IMR-90 (cell line): ENCODE measurements at regions of chr1 and their contacts with region 1.

Region 1: GRCh38 chr1:69747196-69747595 is 179.5 kb downstream of the LRRC7 start:
- DNase-seq: no peak
- ATAC-seq: no peak
- H3K4me3 ChIP-seq: no peak overlapping the region
- H3K27ac ChIP-seq: no peak overlapping the region
- H3K4me1 ChIP-seq: no peaks in the 10 kb centered on the region
- H3K27me3 ChIP-seq: no peaks in the 10 kb centered on the region
- CTCF ChIP-seq: no peak
- POLR2A ChIP-seq: no peak
- RAD21 ChIP-seq: no peak

Region 2: DNA sequence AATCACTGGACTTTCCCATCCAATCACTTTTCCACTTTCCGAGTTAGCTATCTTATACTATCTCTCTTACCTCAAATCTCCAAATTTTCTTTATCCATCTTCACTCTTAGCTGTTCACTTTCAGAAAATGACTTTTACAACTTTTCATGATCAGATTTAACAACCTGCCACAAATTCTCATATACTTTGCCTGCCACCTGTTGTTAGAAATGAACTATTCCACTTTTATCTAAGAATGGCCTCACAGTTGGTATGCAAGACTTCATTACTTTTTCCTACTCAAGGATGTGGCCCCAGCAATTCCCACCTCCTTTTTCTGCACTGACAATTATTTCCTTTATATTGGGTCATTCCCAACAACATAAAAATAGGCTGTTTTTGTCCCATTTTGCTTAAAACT is 1156.7 kb before region 1 on chr1:
- CTCF ChIA-PET with region 1: no interaction called
- POLR2A ChIA-PET with region 1: no interaction called
- dilution Hi-C with region 1: no loop called
- in situ Hi-C with region 1: no loop called
- intact Hi-C with region 1: loop called (anchors 5 kb)
- DNase-seq: no peak
- ATAC-seq: no peak
- H3K4me3 ChIP-seq: no peak overlapping the region
- H3K27ac ChIP-seq: no peak overlapping the region
- H3K4me1 ChIP-seq: no peaks in the 10 kb centered on the region
- H3K27me3 ChIP-seq: no peaks in the 10 kb centered on the region
- CTCF ChIP-seq: no peak
- POLR2A ChIP-seq: no peak
- RAD21 ChIP-seq: no peak

Region 3: DNA sequence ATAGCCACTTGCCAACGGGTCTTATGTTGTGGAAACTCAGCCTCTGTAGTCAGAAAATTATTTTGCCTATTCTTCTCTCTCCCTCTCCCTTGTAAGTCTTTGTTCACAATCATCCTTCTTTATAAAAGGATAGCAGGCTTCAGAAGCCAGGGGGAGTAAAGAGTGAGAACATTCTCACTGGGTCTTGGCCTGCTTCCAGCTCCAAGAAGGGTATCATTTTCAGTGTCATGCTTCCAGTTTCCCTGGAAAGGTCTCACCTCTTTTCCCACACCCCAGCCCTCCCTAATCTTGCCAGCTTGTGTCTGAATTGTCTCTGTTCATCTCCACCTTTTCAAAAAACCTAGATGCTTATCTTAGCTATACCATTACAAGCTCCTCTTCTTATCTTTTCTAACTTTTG is 525.7 kb before region 1 on chr1:
- CTCF ChIA-PET with region 1: no interaction called
- POLR2A ChIA-PET with region 1: no interaction called
- dilution Hi-C with region 1: no loop called
- in situ Hi-C with region 1: no loop called
- intact Hi-C with region 1: no loop called
- DNase-seq: no peak
- ATAC-seq: no peak
- H3K4me3 ChIP-seq: no peak overlapping the region
- H3K27ac ChIP-seq: no peak overlapping the region
- H3K4me1 ChIP-seq: no peaks in the 10 kb centered on the region
- H3K27me3 ChIP-seq: no peaks in the 10 kb centered on the region
- CTCF ChIP-seq: no peak
- POLR2A ChIP-seq: no peak
- RAD21 ChIP-seq: no peak

Region 4: DNA sequence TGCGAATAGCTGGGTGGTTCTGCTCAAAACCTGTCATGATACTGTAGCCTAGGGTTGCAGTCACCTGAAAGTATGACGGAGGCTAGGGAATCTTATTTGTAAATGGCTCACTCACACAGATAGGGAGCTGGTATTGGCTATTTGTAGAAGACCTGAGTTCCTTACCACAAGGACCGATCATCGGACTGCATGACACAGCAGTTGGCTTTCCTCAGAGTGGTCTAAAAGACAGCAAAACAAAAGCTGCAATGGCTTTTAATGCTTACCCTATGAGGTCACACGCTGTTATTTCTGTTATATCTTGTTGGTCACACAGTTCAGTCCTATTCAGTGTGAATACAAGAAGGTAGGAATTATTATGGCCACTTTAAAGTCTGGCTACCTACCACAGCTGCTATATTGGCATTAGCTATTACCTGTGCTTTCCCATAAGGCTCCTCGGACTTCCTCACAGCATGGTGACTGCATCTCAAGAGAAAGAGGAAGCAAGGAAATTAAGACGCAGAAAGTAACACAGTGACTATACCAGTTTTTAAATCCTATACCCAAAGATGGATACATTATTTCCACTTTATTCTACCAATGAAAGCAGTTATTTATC is 247.9 kb before region 1 on chr1:
- CTCF ChIA-PET with region 1: no interaction called
- POLR2A ChIA-PET with region 1: no interaction called
- dilution Hi-C with region 1: no loop called
- in situ Hi-C with region 1: no loop called
- intact Hi-C with region 1: no loop called
- DNase-seq: no peak
- ATAC-seq: no peak
- H3K4me3 ChIP-seq: no peak overlapping the region
- H3K27ac ChIP-seq: no peak overlapping the region
- H3K4me1 ChIP-seq: no peaks in the 10 kb centered on the region
- H3K27me3 ChIP-seq: no peaks in the 10 kb centered on the region
- CTCF ChIP-seq: no peak
- POLR2A ChIP-seq: no peak
- RAD21 ChIP-seq: no peak

Region 5: DNA sequence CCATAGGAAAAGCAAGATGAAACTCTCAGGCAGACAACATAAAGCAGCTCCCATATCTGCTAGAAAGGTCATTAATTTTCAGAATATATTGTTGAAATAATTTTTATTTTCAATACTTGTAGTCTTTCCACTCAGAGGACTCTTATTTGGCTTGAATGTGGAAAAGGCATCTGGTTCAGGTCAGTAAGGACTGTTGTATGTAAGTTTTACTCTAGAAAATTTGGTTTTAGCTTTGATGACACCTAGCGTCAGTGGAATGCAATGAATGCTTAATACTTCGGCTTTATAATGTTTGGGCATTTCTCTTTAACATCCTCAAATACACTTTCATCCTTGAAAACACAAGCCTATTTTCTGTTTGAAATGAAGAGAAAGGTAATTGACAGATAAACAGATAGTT is 394.9 kb after region 1 on chr1:
- CTCF ChIA-PET with region 1: no interaction called
- POLR2A ChIA-PET with region 1: no interaction called
- dilution Hi-C with region 1: no loop called
- in situ Hi-C with region 1: no loop called
- intact Hi-C with region 1: loop called (anchors 5 kb)
- DNase-seq: peak; percentile 45
- ATAC-seq: peak; percentile 55
- H3K4me3 ChIP-seq: no peak overlapping the region
- H3K27ac ChIP-seq: no peak overlapping the region
- H3K4me1 ChIP-seq: no peaks in the 10 kb centered on the region; the same call in 1 of the 2 replicates
- H3K27me3 ChIP-seq: no peaks in the 10 kb centered on the region
- CTCF ChIP-seq: peak; percentile 43
- POLR2A ChIP-seq: no peak
- RAD21 ChIP-seq: peak; percentile 37